ENCODE measurements at regions of chr2 and their contacts with region 1.

Region 1: DNA sequence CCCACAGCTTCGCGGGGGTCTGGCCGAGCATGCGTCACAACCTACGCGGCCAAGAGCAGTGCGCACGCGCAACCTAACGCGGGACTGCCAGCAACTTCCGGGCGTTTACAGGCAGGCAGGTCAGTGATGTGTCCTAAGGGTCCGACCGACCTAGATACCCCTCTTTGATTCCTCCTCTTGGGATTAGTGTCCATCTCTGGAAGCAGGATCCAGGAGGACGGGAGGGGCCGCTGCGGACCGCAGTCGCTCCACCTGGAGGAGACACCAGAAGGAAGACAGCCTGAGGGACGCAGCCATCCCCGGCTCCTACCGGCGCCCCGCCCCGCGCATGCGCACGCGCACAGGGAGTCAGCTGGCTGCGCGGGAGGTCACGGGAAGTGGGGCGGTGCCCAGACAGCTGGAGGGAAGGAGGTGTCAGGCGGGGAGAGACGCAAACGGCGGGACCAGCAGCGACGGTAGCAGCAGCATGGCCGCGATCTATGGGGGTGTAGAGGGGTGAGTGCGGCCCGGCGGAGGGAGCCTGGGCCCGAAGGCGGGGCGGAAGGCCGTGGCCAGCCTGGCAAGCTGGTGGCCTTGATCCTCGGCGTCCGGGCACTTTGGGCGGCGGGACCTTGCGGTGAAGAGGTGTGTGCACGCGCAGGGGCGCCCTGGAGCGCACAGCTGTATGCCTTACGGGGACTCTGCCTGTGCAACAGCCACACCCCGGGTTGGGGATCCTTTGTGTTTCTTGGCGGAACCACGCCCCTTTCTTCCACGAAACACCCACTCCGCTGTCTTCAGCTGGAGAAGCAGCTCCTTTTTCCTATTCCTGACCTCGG is at the start of gene NAGK:
- DNase-seq: peak; percentile 94
- ATAC-seq: peak; percentile 91
- H3K4me3 ChIP-seq: peak within 1 kb of the TSS; percentile 69
- H3K27ac ChIP-seq: peak within 1 kb of the TSS; percentile 95
- H3K4me1 ChIP-seq: peaks cover 21% of the 10 kb centered on the region
- H3K27me3 ChIP-seq: no peaks in the 10 kb centered on the region
- CTCF ChIP-seq: 0 out of 2 replicates have a peak, but pooled peaks have one; percentile 1
- POLR2A ChIP-seq: peak; percentile 99
- RAD21 ChIP-seq: no peak
- total RNA-seq, gene NAGK: 60.4 and 77.8 TPM in 2 replicates

Region 2: DNA sequence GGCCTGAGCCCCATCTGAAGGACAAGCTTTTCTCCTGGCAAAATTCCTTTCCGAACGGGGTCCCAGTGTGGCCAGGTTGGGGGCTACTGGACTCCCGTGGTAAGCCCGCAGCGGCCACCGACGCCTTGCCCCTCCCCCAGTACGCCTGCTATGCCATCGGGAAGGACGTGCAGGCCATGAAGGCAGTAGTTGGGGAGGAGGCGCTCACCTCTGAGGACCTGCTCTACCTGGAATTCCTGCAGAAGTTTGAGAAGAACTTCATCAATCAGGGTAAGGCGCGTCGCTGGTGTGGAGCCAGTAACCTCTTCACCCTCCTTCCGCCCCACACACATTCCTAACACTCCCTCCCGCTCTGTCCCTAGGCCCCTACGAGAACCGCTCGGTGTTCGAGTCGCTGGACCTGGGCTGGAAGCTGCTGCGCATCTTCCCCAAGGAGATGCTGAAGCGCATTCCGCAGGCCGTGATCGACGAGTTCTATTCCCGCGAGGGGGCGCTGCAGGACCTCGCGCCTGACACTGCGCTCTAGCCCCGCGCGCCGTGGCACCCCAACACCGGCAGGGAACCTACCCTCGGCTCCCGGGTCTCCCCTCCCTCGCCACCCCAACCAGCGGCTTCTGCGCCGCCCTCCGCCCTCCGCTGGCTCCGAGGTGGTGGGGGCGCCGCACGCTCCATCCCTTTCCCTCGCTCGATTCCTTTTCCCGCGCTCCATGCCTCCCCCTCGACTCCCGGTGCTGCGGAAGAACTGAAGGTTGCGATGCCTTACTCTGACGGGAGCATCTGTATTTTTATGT is 103.6 kb before region 1 on chr2:
- CTCF ChIA-PET with region 1: interaction called, 18 read pairs
- POLR2A ChIA-PET with region 1: no interaction called
- dilution Hi-C with region 1: no loop called
- in situ Hi-C with region 1: no loop called
- intact Hi-C with region 1: no loop called
- DNase-seq: peak; percentile 58
- ATAC-seq: peak; percentile 96
- H3K4me3 ChIP-seq: peak overlapping the region; percentile 40
- H3K27ac ChIP-seq: no peak overlapping the region
- H3K4me1 ChIP-seq: no peaks in the 10 kb centered on the region
- H3K27me3 ChIP-seq: peaks cover 5% of the 10 kb centered on the region; the same call in 1 of the 2 replicates
- CTCF ChIP-seq: peak; percentile 75
- POLR2A ChIP-seq: no peak
- RAD21 ChIP-seq: peak; percentile 63

Region 3: DNA sequence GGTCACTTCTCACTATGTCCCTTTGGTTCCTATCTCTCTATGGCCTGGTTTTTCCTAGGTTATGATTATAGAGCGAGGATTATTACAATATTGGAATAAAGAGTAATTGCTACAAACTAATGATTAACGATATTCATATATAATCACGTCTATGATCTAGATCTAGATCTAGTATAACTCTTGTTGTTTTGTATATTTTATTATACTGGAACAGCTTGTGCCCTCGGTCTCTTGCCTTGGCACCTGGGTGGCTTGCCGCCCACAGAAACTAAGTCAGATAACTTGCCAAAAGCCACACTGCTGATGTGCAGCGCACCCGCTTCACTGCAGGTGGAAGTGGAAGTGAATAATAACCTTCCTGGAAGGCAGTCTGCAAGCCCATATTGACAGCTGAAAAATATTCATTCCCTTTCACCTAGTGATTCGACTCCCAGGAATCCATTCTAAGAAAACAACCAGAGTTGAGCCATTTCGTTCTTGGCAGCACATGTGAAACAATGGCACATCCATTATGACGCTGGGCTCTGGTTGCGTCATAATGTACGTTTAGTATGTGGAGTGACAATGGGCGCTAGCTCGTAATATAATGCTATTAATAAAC is 90.7 kb before region 1 on chr2:
- CTCF ChIA-PET with region 1: no interaction called
- POLR2A ChIA-PET with region 1: no interaction called
- dilution Hi-C with region 1: no loop called
- in situ Hi-C with region 1: no loop called
- intact Hi-C with region 1: loop called (anchors 5 kb)
- DNase-seq: peak; percentile 93
- ATAC-seq: peak; percentile 18
- H3K4me3 ChIP-seq: no peak overlapping the region; the same call in 1 of the 2 replicates
- H3K27ac ChIP-seq: no peak overlapping the region
- H3K4me1 ChIP-seq: peaks cover 5% of the 10 kb centered on the region; the same call in 1 of the 2 replicates
- H3K27me3 ChIP-seq: no peaks in the 10 kb centered on the region
- CTCF ChIP-seq: no peak
- POLR2A ChIP-seq: 0 out of 2 replicates have a peak, but pooled peaks have one; percentile 11
- RAD21 ChIP-seq: no peak

Region 4: GRCh38 chr2:70994756-70995729 is 73.4 kb before region 1 on chr2 and contains the start of gene TEX261:
- CTCF ChIA-PET with region 1: no interaction called
- POLR2A ChIA-PET with region 1: no interaction called
- dilution Hi-C with region 1: no loop called
- in situ Hi-C with region 1: no loop called
- intact Hi-C with region 1: loop called (anchors 2 kb)
- DNase-seq: peak; percentile 71
- ATAC-seq: peak; percentile 99
- H3K4me3 ChIP-seq: peak within 1 kb of the TSS; percentile 74
- H3K27ac ChIP-seq: peak within 1 kb of the TSS; percentile 49
- H3K4me1 ChIP-seq: peaks cover 11% of the 10 kb centered on the region
- H3K27me3 ChIP-seq: no peaks in the 10 kb centered on the region
- CTCF ChIP-seq: peak; percentile 91
- POLR2A ChIP-seq: no peak
- RAD21 ChIP-seq: peak; percentile 18; the same call in 1 of the 2 replicates
- total RNA-seq, gene TEX261: 26.3 and 31.1 TPM in 2 replicates

Region 5: DNA sequence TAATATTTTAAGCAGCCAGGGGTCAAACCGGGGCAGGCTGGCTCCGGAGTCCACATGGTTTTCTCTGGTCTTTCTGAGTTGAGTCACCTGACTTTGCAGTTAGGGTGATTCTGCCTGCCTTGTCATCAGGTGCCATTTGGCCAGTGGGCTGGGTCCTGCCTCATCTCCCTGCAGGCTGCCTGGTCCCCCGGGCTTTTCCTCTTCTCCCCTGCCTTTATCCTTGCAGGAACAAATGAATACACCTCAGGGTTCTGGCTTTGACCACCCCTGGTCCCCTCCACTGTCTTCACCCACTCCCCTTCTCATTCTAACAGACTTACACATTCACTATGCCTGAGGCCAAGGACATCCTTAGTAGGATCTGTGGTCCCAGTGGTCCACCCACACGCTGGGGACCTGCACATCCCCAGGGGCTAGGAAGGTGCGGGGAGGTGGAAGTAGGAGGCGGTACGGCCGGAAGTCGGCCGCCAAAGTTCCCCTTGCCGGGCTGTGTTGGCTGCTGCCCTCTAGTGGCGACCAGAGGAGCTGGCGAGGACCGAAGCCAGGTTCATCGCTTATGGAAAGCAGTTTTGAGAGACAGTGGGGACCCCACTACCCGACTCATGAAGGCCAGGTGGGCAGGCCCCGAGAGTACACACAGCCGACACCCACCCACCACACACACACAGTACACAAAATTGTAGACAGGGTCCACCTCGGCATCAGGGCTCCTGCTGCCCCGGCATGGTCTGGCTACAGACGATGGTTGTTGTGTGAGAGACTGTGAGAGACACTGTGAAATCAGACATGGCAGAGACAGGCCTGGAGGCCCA is 67.4 kb before region 1 on chr2:
- CTCF ChIA-PET with region 1: no interaction called
- POLR2A ChIA-PET with region 1: no interaction called
- dilution Hi-C with region 1: no loop called
- in situ Hi-C with region 1: no loop called
- intact Hi-C with region 1: loop called (anchors 2 kb)
- DNase-seq: peak; percentile 60
- ATAC-seq: peak; percentile 96
- H3K4me3 ChIP-seq: peak overlapping the region; percentile 46
- H3K27ac ChIP-seq: no peak overlapping the region
- H3K4me1 ChIP-seq: peaks cover 2% of the 10 kb centered on the region; the same call in 1 of the 2 replicates
- H3K27me3 ChIP-seq: peaks cover 5% of the 10 kb centered on the region; the same call in 1 of the 2 replicates
- CTCF ChIP-seq: peak; percentile 80
- POLR2A ChIP-seq: no peak
- RAD21 ChIP-seq: peak; percentile 54

Region 6: DNA sequence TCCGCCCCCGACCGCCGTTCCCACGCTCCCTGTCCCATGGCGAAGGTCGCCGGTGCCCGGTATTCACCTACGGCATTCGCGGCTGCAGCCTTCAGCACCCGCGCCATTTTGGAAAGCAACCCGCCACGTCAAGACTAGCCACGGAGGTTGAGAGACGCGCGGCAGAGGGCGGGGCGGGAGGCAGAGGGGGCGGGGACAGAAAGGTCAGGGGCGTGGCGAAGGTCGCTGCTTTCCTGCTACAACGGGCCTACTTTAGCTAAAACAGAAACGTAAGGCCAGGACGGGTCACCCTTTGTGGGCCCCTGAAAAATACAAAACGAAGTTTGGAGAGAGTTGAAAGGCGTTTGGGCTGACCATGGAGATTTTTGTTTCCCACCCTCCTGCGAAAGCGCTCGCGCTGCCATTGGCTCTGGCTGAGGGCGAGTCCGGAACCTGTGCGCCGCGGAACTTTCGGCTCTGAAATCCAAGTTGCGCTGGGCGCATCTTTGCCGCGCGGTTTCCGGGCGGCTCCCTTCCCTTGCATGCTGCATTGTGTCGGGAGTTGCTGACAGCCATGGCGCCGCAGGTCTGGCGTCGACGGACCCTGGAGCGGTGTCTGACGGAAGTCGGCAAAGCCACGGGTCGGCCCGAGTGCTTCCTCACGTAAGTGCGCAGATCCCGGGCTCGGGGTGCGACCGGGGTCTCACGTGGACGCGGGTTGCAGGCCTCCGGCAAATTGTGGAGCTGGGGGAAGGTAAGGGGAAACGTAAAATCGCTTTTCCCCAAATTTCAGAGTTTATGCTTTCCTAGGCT is 61.9 kb after region 1 on chr2 and contains the starts of genes MCEE and MPHOSPH10:
- CTCF ChIA-PET with region 1: interaction called, 5 read pairs
- POLR2A ChIA-PET with region 1: no interaction called
- dilution Hi-C with region 1: no loop called
- in situ Hi-C with region 1: no loop called
- intact Hi-C with region 1: loop called (anchors 1 kb)
- DNase-seq: peak; percentile 90
- ATAC-seq: peak; percentile 96
- H3K4me3 ChIP-seq: peak within 1 kb of the TSS; percentile 78
- H3K27ac ChIP-seq: peak within 1 kb of the TSS; percentile 84
- H3K4me1 ChIP-seq: peaks cover 3% of the 10 kb centered on the region; the same call in 1 of the 2 replicates
- H3K27me3 ChIP-seq: no peaks in the 10 kb centered on the region
- CTCF ChIP-seq: no peak
- POLR2A ChIP-seq: peak; percentile 70
- RAD21 ChIP-seq: no peak
- total RNA-seq, gene MCEE: 11.1 and 13.9 TPM in 2 replicates
- total RNA-seq, gene MPHOSPH10: 5.4 and 15.6 TPM in 2 replicates

Region 7: GRCh38 chr2:71235930-71236587 is 167.6 kb after region 1 on chr2:
- CTCF ChIA-PET with region 1: no interaction called
- POLR2A ChIA-PET with region 1: no interaction called
- dilution Hi-C with region 1: no loop called
- in situ Hi-C with region 1: no loop called
- intact Hi-C with region 1: no loop called
- DNase-seq: no peak
- ATAC-seq: no peak
- H3K4me3 ChIP-seq: no peak overlapping the region
- H3K27ac ChIP-seq: no peak overlapping the region
- H3K4me1 ChIP-seq: no peaks in the 10 kb centered on the region
- H3K27me3 ChIP-seq: peaks cover 11% of the 10 kb centered on the region
- CTCF ChIP-seq: no peak
- POLR2A ChIP-seq: no peak
- RAD21 ChIP-seq: no peak

Measured in IMR-90 (cell line).